Naive thymus-derived CD4-positive, alpha-beta T cell (primary cell): ENCODE measurements at regions of chr9 and their contacts with region 1.

Region 1: DNA sequence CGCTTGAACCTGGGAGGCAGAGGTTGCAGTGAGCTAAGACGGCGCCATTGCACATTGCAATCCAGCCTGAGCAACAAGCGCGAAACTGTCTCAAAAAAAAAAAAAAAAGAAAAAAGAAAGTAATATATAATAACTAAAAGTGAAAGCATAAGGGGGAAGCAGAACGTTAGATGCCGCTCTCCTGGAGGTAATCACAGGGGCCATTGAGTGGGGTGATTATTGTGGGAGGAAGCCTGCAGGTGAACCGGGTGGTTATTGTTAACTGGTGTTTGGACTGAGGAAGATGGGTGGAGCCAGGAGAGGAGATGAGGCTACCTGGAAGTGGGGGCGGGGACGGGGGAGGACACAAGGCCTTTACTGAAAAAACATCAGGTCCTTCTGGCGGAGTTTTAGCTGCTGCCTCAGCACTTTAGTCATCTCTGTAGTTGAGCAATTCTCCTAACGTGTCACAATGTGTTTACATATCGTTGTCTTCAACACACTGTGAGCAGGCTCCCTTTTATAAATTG is 5.3 kb upstream of the TJP2 start:
- DNase-seq: peak in 6 of 9 donors; percentile 9 to 67 (median 16)
- ATAC-seq: peak; percentile 79
- H3K4me3 ChIP-seq: peak overlapping the region; percentile 54
- H3K4me3 Mint-ChIP-seq: peak overlapping the region; percentile 72 to 87 (median 84)
- H3K27ac ChIP-seq: no peak overlapping the region
- H3K27ac Mint-ChIP-seq: peak overlapping the region in 7 of 9 donors; percentile 24 to 90 (median 74)
- H3K4me1 ChIP-seq: peaks cover 7 to 9% of the 10 kb centered on the region in 2 donors
- H3K4me1 Mint-ChIP-seq: peaks cover 18 to 30% (median 23%) of the 10 kb centered on the region in 7 donors
- H3K27me3 ChIP-seq: no peaks in the 10 kb centered on the region
- H3K27me3 Mint-ChIP-seq: peaks cover 11 to 29% (median 18%) of the 10 kb centered on the region in 5 donors

Region 2: GRCh38 chr9:69181908-69182353 is 13.2 kb after region 1 on chr9:
- CTCF ChIA-PET with region 1: no interaction called
- POLR2A ChIA-PET with region 1: interaction called, 3 read pairs
- intact Hi-C with region 1: loop called in 1 of 2 experiments (anchors 1 kb)
- DNase-seq: no peak
- ATAC-seq: peak; percentile 55
- H3K4me3 ChIP-seq: no peak overlapping the region
- H3K4me3 Mint-ChIP-seq: peak overlapping the region in 1 of 10 donors; percentile 5
- H3K27ac ChIP-seq: no peak overlapping the region
- H3K27ac Mint-ChIP-seq: peak overlapping the region in 3 of 9 donors; percentile 26 to 47 (median 42)
- H3K4me1 ChIP-seq: no peaks in the 10 kb centered on the region
- H3K4me1 Mint-ChIP-seq: peaks cover 8 to 56% (median 20%) of the 10 kb centered on the region in 7 donors
- H3K27me3 ChIP-seq: no peaks in the 10 kb centered on the region
- H3K27me3 Mint-ChIP-seq: no peaks in the 10 kb centered on the region

Region 3: DNA sequence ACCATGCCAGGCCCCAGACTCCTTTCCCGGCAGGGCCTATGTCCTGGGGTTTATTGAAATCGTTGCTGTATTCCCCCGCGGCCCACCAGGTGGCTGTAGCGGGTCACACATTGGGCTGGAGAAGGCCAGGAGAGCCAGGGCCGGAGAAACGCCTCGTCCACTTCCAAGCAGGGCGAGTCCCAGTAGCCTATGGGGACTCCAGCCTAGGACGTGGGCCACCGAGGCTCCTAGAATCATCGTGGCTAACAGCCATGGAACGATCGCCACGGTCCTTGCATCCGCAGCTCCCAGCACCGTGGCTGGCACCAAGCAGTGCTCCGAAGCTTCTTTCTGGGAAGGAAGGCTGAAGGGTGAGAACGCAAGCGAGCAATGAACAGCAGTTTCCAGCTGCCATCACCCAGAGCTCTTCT is 244.0 kb after region 1 on chr9:
- CTCF ChIA-PET with region 1: no interaction called
- POLR2A ChIA-PET with region 1: no interaction called
- intact Hi-C with region 1: no loop called
- DNase-seq: no peak
- ATAC-seq: no peak
- H3K4me3 ChIP-seq: no peak overlapping the region
- H3K4me3 Mint-ChIP-seq: no peak overlapping the region
- H3K27ac ChIP-seq: no peak overlapping the region
- H3K27ac Mint-ChIP-seq: no peak overlapping the region
- H3K4me1 ChIP-seq: no peaks in the 10 kb centered on the region
- H3K4me1 Mint-ChIP-seq: peaks cover 0 to 2% (median 0%) of the 10 kb centered on the region in 7 donors
- H3K27me3 ChIP-seq: no peaks in the 10 kb centered on the region
- H3K27me3 Mint-ChIP-seq: peaks cover 0 to 13% (median 7%) of the 10 kb centered on the region in 5 donors